ENCODE measurements at regions of chr1 and their contacts with region 1.

Region 1: GRCh38 chr1:23751050-23751814 is 8.0 kb downstream of the ELOA start:
- DNase-seq: peak in 8 of 10 donors; percentile 8 to 69 (median 20)
- ATAC-seq: peak; percentile 44 to 65
- H3K4me3 Mint-ChIP-seq: no peak overlapping the region
- H3K27ac Mint-ChIP-seq: peak overlapping the region in 5 of 10 donors; percentile 47 to 91 (median 78)
- H3K4me1 Mint-ChIP-seq: peaks cover 27 to 35% (median 32%) of the 10 kb centered on the region in 4 donors
- H3K27me3 Mint-ChIP-seq: no peaks in the 10 kb centered on the region

Region 2: DNA sequence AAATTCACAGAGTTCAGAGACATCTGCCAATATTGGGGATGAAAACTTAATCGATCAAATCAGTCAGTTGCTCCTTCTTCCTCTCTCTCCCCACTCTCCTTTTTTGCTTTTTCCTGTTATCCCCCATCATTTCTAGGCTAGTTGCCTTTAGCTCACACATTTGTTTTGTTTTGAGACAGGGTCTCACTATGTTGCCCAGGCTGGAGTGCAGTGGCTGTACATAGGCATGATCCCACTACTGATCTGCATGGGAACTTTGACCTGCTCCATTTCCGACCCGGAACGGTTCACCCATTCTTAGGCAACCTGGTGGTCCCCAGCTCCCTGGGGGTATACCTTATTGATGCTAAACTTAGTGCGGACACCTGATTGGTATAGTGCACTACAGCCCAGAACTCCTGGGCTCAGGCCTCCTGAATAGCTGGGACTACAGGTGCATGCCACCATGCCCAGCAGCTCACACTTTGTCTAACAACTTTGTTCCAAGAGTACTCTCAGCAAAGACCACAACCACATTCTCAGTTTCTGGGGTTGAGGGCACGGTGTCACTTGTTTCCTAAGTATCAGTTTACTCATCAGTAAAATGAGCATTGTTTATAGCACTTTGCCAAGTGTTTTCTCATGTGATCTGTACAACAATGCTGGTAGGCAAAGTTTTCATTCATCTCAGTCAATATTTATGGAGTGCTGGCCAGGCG is 14.6 kb before region 1 on chr1:
- POLR2A ChIA-PET with region 1: no interaction called
- DNase-seq: no peak
- ATAC-seq: no peak
- H3K4me3 Mint-ChIP-seq: no peak overlapping the region
- H3K27ac Mint-ChIP-seq: peak overlapping the region in 1 of 10 donors; percentile 84
- H3K4me1 Mint-ChIP-seq: no peaks in the 10 kb centered on the region
- H3K27me3 Mint-ChIP-seq: no peaks in the 10 kb centered on the region

Region 3: DNA sequence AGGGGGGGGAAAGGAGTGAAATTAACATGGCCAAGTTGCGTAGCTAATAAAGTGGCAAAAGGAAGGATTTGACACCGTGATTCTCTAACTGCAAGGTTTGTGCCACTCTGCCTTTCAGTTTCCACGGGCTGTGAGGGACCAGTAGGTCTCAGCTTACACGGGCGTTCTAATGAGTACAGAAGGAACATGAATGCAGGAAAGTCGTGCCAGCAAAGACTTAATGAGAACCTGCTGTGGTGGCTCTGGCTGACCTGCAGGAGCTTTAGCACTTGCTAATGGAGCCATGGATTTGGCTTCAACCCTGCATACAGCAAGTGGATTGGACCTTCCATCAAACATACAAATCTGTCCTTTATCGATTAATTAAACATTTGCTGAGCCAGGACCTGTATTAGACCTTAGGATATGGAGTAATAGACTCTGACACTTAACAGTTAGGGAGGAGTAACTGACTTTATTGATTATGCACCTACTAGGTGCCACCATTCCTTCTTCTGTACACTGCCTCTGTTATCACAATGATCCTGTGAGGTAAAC is 11.9 kb after region 1 on chr1:
- POLR2A ChIA-PET with region 1: interaction called, 10 read pairs
- DNase-seq: no peak
- ATAC-seq: no peak
- H3K4me3 Mint-ChIP-seq: no peak overlapping the region
- H3K27ac Mint-ChIP-seq: peak overlapping the region in 3 of 10 donors; percentile 40 to 43 (median 43)
- H3K4me1 Mint-ChIP-seq: peaks cover 0 to 7% (median 2%) of the 10 kb centered on the region in 4 donors
- H3K27me3 Mint-ChIP-seq: no peaks in the 10 kb centered on the region

Measured in naive thymus-derived CD8-positive, alpha-beta T cell (primary cell).